MCF 10A (cell line): ENCODE measurements at regions of chr15 and their contacts with region 1.

Region 1: DNA sequence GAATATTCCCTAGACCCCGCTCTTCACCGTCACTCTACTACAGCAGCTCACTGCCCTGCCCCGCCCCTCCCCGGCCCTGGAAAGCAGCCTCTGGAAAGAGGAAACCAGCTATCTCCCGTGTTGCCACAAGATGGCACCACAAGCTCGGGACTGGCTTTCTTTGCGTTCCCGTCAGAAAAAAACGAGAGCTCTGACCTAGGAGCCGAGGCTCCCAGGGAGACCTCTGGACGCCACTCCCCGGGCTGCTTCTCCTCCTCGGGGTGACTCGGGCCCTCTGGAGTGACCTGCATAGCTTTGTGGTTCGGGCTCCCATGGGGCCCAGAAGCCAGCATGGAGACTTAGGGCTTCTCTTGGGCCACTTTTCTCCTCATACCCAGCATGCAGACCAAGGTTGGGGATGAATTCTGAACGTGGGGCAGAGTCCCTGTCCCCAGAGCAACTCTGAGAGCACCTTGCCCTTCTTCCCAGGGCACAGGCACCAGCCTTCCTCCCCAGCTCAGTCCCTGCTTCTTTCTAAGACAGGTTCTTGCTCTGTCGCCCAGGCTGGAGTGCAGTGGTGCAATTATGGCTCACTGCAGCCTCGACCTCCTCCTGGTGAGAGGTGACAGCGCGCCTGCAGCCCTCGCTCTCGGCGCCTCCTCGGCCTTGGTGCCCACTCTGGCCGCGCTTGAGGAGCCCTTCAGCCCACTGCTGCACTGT is 19.0 kb downstream of the STOML1 start:
- DNase-seq: peak; percentile 90
- H3K4me3 Mint-ChIP-seq: no peak overlapping the region
- H3K27ac Mint-ChIP-seq: no peak overlapping the region
- H3K4me1 Mint-ChIP-seq: peaks cover 12% of the 10 kb centered on the region
- H3K27me3 Mint-ChIP-seq: no peaks in the 10 kb centered on the region
- CTCF ChIP-seq: peak; percentile 89

Region 2: DNA sequence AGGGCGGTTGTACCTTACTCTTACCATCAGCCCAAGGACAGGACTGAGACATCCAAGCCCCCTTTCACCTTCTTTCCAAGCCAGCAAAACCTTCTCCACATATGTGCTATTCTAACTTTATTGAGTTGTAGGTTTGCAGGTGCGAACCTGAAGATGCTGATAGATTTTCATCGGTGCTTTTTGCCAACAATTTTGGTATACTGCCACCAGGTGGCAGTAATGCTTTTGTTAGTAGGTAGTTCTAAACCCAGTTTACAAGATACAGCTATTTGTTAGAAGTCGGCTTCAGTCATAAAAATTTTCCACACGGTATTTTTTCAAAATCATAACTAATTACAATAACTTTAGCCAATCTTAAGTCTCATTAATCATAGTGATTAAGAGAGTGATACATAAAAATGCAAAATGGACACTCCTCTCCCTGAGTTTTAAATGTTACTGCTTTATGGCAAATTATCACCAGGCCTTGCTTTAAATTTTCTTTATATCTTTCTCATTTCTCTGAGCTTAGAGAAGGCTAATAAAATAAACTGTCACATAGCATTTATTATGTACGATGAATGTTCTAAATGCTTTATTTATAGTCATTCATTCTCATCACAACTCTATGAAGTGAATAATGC is 99.1 kb before region 1 on chr15:
- CTCF ChIA-PET with region 1: interaction called, 11 read pairs
- POLR2A ChIA-PET with region 1: no interaction called
- intact Hi-C with region 1: no loop called
- DNase-seq: peak; percentile 73
- H3K4me3 Mint-ChIP-seq: no peak overlapping the region
- H3K27ac Mint-ChIP-seq: no peak overlapping the region
- H3K4me1 Mint-ChIP-seq: no peaks in the 10 kb centered on the region
- H3K27me3 Mint-ChIP-seq: peaks cover 70% of the 10 kb centered on the region
- CTCF ChIP-seq: peak; percentile 70

Region 3: GRCh38 chr15:73997986-73998385 is 24.9 kb after region 1 on chr15:
- CTCF ChIA-PET with region 1: interaction called, 31 read pairs
- POLR2A ChIA-PET with region 1: interaction called, 27 read pairs
- intact Hi-C with region 1: loop called (anchors 1 kb)
- DNase-seq: peak; percentile 63
- H3K4me3 Mint-ChIP-seq: peak overlapping the region; percentile 81
- H3K27ac Mint-ChIP-seq: peak overlapping the region; percentile 77
- H3K4me1 Mint-ChIP-seq: peaks cover 40% of the 10 kb centered on the region
- H3K27me3 Mint-ChIP-seq: no peaks in the 10 kb centered on the region
- CTCF ChIP-seq: peak; percentile 49

Region 4: DNA sequence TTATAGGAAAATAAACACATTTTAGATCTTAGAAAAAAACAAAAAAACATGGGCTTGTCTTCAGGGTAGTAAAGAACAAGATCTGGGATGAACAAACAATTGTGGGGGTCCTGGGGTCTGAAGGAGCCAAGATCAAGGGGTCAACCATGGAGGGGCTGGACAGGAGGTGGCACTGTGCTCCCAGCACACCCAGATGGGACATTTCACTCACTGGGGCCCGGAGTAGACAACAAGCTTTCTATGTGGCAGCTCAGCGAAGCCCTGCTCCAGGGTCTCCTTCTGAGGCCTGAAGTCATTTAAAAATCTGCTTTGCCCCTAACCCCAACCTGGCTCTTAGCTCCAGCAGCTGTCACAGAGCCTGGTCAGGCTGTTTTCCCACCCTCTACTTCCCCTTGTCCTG is 74.6 kb after region 1 on chr15:
- CTCF ChIA-PET with region 1: interaction called, 54 read pairs
- POLR2A ChIA-PET with region 1: interaction called, 3 read pairs
- intact Hi-C with region 1: no loop called
- DNase-seq: no peak
- H3K4me3 Mint-ChIP-seq: no peak overlapping the region
- H3K27ac Mint-ChIP-seq: no peak overlapping the region
- H3K4me1 Mint-ChIP-seq: peaks cover 30% of the 10 kb centered on the region
- H3K27me3 Mint-ChIP-seq: no peaks in the 10 kb centered on the region
- CTCF ChIP-seq: no peak

Region 5: GRCh38 chr15:74127260-74127953 is 154.3 kb after region 1 on chr15:
- CTCF ChIA-PET with region 1: interaction called, 7 read pairs
- POLR2A ChIA-PET with region 1: no interaction called
- intact Hi-C with region 1: loop called (anchors 5 kb)
- DNase-seq: peak; percentile 84
- H3K4me3 Mint-ChIP-seq: peak overlapping the region; percentile 46
- H3K27ac Mint-ChIP-seq: no peak overlapping the region
- H3K4me1 Mint-ChIP-seq: no peaks in the 10 kb centered on the region
- H3K27me3 Mint-ChIP-seq: peaks cover 87% of the 10 kb centered on the region
- CTCF ChIP-seq: peak; percentile 98

Region 6: DNA sequence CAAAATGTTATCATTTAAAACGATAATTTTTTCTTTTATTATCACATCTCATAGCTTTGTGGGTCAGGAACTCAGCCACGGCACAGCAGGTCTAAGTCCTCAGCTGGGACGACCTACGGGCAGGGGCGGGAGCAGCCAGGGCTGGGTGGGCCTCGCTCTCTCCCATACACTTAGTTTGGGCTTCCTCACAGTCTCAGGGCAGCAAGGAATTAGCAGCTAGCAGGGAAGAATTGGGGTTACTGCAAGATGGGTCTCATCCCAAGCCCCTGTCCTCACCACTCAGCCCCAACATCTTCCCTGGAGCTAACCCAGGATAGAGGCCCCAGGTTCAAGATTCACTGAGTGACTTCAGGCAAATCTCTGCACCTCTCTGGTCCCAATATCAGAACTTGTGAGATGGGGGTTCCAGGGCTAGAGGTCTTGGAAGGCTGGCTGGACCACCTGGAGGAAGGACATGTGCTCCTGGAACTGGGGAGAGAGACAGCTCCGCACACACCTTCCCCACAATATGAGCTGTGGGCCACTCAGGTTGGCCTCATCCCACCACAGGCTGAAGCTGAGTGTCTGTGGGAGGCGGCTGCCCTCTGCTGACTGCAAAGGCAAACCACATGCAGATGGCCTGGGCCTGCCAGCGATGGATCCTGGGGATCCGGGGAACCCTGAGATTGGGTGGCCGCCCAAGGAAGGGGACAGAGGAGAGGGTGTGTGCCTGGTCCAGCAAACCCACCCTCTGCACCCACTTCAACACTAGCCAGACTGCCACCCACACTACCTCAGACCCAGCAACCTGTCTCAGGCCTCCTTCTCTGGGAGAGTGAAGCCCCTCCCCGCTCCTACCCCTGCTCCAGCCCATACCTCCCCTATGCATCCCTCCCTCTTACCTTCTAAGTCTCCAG is 349.3 kb after region 1 on chr15:
- CTCF ChIA-PET with region 1: interaction called, 17 read pairs
- POLR2A ChIA-PET with region 1: interaction called, 3 read pairs
- intact Hi-C with region 1: loop called (anchors 1 kb)
- DNase-seq: peak; percentile 62
- H3K4me3 Mint-ChIP-seq: no peak overlapping the region
- H3K27ac Mint-ChIP-seq: no peak overlapping the region
- H3K4me1 Mint-ChIP-seq: no peaks in the 10 kb centered on the region
- H3K27me3 Mint-ChIP-seq: no peaks in the 10 kb centered on the region
- CTCF ChIP-seq: peak; percentile 91